ENCODE measurements at regions of chr19 and their contacts with region 1.

Region 1: DNA sequence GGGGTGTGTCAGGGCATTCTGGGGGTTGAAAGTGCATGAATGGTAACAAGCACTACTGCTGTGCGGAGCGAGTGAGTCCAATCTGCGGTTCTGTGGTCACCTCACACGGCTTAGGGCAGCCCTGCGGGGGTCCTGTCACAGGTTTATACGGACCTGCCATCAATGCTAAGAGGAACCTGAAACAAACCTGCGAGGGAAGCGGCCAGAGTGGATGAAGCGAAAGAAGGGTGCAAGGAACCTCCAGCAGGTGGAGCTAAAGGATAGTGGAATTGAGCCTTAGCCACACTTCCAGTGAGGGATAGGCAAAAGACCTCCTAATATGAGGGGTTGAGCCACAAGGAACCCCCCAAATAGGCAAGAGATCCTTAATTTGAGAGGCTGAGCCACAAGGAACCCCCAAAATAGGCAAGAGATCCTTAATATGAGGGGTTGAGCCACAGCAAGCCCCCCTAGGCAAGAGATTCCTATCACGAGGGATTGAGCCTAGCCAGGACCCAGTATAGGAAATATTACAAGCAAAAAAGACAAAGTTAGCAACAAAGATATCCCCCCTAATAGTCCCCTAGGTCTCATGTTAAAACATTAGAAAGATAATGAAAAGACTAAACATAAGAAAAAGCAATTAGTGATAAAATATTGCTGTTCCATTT is 6.3 kb upstream of the ZNF69 start:
- DNase-seq: peak; percentile 76 to 88 (median 83)
- H3K4me3 ChIP-seq: peak overlapping the region in 1 of 7 experiments; percentile 38
- H3K27ac ChIP-seq: no peak overlapping the region
- H3K4me1 ChIP-seq: peaks cover 0 to 21% (median 9%) of the 10 kb centered on the region in 4 experiments
- H3K27me3 ChIP-seq: no peaks in the 10 kb centered on the region

Region 2: GRCh38 chr19:11902228-11902627 is 21.0 kb after region 1 on chr19:
- CTCF ChIA-PET with region 1: no interaction called
- POLR2A ChIA-PET with region 1: no interaction called
- DNase-seq: no peak
- H3K4me3 ChIP-seq: peak overlapping the region in 1 of 7 experiments; percentile 0
- H3K27ac ChIP-seq: no peak overlapping the region
- H3K4me1 ChIP-seq: no peaks in the 10 kb centered on the region
- H3K27me3 ChIP-seq: no peaks in the 10 kb centered on the region

Region 3: DNA sequence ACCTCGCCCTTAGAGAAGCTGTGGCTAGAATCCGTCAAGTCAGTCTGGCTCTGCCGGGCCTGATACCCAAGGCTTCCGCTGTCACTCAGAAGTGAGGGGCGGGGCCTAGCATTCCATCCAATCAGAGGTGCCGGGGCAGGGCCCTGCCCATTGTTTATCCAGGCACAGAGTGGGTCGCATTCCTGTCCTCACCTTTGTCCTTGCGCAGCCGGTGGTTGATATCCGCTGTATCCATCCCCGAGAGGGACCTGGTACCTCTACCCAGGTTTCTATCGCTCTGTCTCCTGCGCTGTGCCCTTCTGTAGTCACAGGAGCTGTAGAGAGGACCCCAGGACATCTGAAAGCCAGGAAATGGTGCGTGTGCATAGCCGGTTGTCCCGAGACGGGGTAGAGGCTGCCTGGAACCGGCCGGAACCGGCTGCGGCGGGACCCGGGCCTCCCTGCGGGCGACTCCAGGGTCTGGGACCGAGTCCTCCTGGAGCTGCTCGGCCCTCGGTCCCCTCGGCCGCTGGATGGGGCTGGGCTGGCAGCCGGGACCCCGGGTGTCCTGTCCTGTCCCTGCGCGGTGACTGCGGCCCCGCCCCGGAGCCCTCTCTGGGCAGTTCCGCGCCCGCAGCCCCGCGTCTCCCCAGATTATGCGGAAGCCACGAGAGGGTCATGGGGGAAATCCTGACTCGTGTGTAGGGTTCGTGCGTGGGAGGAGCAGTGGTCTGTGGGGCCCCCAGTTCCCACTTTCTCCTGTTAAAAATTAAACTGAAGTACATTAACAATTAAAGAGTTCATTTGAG is 83.8 kb after region 1 on chr19 and contains the start of gene ZNF763:
- CTCF ChIA-PET with region 1: interaction called, 19 read pairs
- POLR2A ChIA-PET with region 1: no interaction called
- DNase-seq: peak; percentile 91 to 96 (median 96)
- H3K4me3 ChIP-seq: peak within 1 kb of the TSS; percentile 73 to 100 (median 94)
- H3K27ac ChIP-seq: peak within 1 kb of the TSS; percentile 83 to 91
- H3K4me1 ChIP-seq: peaks cover 0 to 22% (median 18%) of the 10 kb centered on the region in 4 experiments
- H3K27me3 ChIP-seq: no peaks in the 10 kb centered on the region